CD8-positive, alpha-beta T cell (primary cell): ENCODE measurements at regions of chr19 and their contacts with region 1.

Region 1: GRCh38 chr19:1074544-1075283 is 7.7 kb downstream of the ARHGAP45 start:
- DNase-seq: peak; percentile 90 to 100 (median 97)
- ATAC-seq: peak; percentile 27
- H3K4me3 ChIP-seq: peak overlapping the region; percentile 40 to 63
- H3K4me3 Mint-ChIP-seq: peak overlapping the region; percentile 79
- H3K27ac ChIP-seq: peak overlapping the region; percentile 60 to 98
- H3K27ac Mint-ChIP-seq: peak overlapping the region; percentile 100
- H3K4me1 ChIP-seq: peaks cover 75% of the 10 kb centered on the region
- H3K4me1 Mint-ChIP-seq: peaks cover 51% of the 10 kb centered on the region
- H3K27me3 ChIP-seq: no peaks in the 10 kb centered on the region
- H3K27me3 Mint-ChIP-seq: no peaks in the 10 kb centered on the region
- CTCF ChIP-seq: no peak

Region 2: GRCh38 chr19:991174-991918 is 83.4 kb before region 1 on chr19:
- CTCF ChIA-PET with region 1: no interaction called
- POLR2A ChIA-PET with region 1: no interaction called
- intact Hi-C with region 1: no loop called
- DNase-seq: peak in 7 of 9 experiments; percentile 28 to 82 (median 68)
- ATAC-seq: peak; percentile 80
- H3K4me3 ChIP-seq: no peak overlapping the region
- H3K4me3 Mint-ChIP-seq: no peak overlapping the region
- H3K27ac ChIP-seq: no peak overlapping the region
- H3K27ac Mint-ChIP-seq: no peak overlapping the region
- H3K4me1 ChIP-seq: peaks cover 10% of the 10 kb centered on the region
- H3K4me1 Mint-ChIP-seq: peaks cover 2% of the 10 kb centered on the region
- H3K27me3 ChIP-seq: no peaks in the 10 kb centered on the region
- H3K27me3 Mint-ChIP-seq: no peaks in the 10 kb centered on the region
- CTCF ChIP-seq: no peak

Region 3: GRCh38 chr19:1020868-1021425 is 53.8 kb before region 1 on chr19 and contains the start of gene TMEM259:
- CTCF ChIA-PET with region 1: interaction called, 44 read pairs
- POLR2A ChIA-PET with region 1: interaction called, 647 read pairs
- intact Hi-C with region 1: loop called (anchors 2 kb)
- DNase-seq: peak; percentile 94 to 98 (median 98)
- ATAC-seq: peak; percentile 86
- H3K4me3 ChIP-seq: peak within 1 kb of the TSS; percentile 89 to 94
- H3K4me3 Mint-ChIP-seq: peak within 1 kb of the TSS; percentile 90
- H3K27ac ChIP-seq: peak within 1 kb of the TSS; percentile 97 to 99
- H3K27ac Mint-ChIP-seq: peak within 1 kb of the TSS; percentile 100
- H3K4me1 ChIP-seq: peaks cover 43% of the 10 kb centered on the region
- H3K4me1 Mint-ChIP-seq: peaks cover 45% of the 10 kb centered on the region
- H3K27me3 ChIP-seq: no peaks in the 10 kb centered on the region
- H3K27me3 Mint-ChIP-seq: no peaks in the 10 kb centered on the region
- CTCF ChIP-seq: no peak
- total RNA-seq, gene TMEM259: 408 to 443 TPM

Region 4: DNA sequence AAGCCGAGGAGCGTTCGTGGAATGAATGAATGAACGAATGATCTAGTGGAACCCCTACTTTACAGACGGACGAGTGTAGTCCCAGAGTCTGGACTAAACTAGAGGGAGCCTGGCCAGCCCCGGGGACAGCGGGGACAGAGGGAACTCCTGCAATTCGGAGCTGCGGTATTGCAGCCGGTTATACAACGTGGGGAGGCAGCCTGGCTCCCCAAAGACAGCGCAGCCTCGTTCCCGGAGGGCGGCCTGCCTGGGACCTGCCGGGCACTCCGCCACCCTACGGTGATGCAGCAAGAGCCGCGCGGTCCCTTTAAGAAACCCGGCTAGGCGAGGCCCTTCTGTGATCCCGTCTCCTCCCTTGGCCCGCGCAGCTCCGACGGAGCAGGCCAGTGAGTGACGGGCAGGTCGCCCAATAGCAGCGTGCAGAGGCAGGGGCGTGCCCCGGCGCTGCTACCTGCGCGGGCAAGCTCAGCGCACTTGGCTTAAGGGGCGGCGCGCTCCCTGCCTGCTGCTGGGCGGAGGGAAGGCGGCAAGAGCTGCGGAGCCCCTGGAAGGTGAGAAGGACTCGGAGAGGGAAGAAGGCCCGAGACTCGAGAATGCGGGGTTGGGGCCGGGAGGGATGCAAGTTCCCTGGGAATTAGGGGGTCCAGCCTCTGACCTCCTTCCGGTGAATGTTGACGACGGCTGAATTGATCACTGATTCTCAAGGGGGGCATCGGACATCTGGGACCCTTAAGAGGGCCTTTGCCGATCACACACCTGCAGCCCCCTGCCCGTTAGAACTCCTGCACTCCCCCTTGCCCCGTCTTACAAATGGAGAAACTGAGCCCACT is 34.9 kb before region 1 on chr19 and contains the start of gene ABCA7:
- CTCF ChIA-PET with region 1: interaction called, 7 read pairs
- POLR2A ChIA-PET with region 1: interaction called, 108 read pairs
- intact Hi-C with region 1: no loop called
- DNase-seq: peak; percentile 98 to 100 (median 99)
- ATAC-seq: peak; percentile 90
- H3K4me3 ChIP-seq: peak within 1 kb of the TSS; percentile 71 to 96
- H3K4me3 Mint-ChIP-seq: peak within 1 kb of the TSS; percentile 99
- H3K27ac ChIP-seq: peak within 1 kb of the TSS; percentile 65 to 71
- H3K27ac Mint-ChIP-seq: peak within 1 kb of the TSS; percentile 96
- H3K4me1 ChIP-seq: peaks cover 43% of the 10 kb centered on the region
- H3K4me1 Mint-ChIP-seq: peaks cover 50% of the 10 kb centered on the region
- H3K27me3 ChIP-seq: no peaks in the 10 kb centered on the region
- H3K27me3 Mint-ChIP-seq: no peaks in the 10 kb centered on the region
- CTCF ChIP-seq: no peak
- total RNA-seq, gene ABCA7: 93.3 to 98.0 TPM

Region 5: DNA sequence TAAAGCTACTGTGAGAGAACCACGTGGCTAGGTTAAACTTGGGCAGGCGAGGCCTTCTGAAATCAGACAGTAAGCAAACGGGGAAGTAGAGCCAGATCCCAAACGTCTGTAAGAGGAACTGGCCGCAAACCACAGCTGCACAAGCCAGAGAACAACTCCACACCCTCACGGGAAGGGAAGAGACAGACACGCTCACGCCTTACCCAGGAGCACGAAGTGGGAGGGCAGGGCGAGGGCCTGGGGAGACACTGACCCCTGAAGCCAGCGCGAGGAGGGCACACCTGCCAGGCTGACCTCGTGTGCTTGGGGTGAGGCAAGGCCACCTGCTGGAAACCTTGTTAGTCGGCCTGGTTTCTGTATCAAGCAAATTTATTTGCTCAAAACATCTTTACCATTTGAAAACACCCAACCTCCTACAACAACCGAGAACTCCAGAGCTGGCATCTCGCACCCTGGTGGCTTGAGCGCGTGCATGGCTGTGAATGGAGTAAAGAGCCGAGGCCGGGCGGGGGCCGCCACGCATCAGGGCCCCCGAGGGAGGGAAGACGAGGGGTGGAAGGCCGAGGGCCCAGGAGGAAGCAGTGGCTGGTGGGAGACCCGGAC is 13.2 kb after region 1 on chr19:
- CTCF ChIA-PET with region 1: interaction called, 80 read pairs
- POLR2A ChIA-PET with region 1: interaction called, 1,023 read pairs
- intact Hi-C with region 1: loop called in 1 of 2 experiments (anchors 2 kb)
- DNase-seq: peak in 5 of 9 experiments; percentile 61 to 82 (median 68)
- ATAC-seq: peak; percentile 21
- H3K4me3 ChIP-seq: no peak overlapping the region
- H3K4me3 Mint-ChIP-seq: peak overlapping the region; percentile 64
- H3K27ac ChIP-seq: peak overlapping the region; percentile 29 to 74
- H3K27ac Mint-ChIP-seq: peak overlapping the region; percentile 95
- H3K4me1 ChIP-seq: peaks cover 90% of the 10 kb centered on the region
- H3K4me1 Mint-ChIP-seq: peaks cover 44% of the 10 kb centered on the region
- H3K27me3 ChIP-seq: no peaks in the 10 kb centered on the region
- H3K27me3 Mint-ChIP-seq: no peaks in the 10 kb centered on the region
- CTCF ChIP-seq: no peak

Region 6: DNA sequence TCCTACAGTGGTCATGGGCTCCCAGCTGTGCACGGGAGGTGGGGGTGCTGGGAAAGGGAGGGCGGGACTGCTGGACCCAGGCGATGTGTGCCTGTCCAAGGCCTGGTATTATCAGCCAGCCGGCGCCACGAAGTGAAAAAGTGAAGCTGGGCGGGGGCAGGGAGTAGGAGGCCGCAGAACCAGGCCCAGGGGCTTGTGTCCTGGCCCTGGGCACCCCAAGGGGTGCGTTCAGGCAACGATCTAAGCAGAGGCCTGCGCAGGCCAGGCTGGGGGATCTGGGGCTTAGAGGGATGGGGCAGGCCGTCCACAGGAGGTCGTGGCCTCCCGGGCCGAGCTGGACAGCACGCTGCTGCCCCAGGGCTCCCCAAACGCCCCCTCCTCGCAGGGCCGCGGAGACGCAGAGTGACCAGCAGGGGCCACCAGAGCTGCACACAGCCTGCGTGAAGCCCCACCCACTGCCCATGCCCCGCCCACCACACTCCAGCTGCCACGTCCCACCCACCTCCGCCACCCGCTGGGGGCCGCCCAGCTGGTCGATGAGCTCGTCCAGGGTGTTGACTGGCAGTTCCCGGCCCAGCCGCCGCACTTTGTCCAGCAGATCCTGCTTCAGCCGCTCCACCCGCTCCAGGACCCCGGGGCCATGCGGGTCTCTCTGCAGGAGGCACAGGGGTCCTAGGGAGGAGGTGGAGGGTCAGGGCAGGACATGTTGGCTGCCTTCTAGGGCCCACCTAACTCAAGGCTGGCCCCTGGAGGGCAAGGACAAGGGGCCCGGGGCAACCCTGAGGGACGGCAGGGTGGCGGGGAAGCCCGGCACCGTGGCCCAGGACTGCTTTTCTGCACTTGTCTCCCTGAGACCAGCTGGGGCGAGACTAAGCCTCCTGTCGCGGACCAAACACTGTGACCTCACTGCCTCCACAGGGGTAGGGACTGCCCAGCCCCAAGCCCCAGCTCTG is 38.6 kb after region 1 on chr19:
- CTCF ChIA-PET with region 1: no interaction called
- POLR2A ChIA-PET with region 1: no interaction called
- intact Hi-C with region 1: no loop called
- DNase-seq: peak; percentile 67 to 92 (median 89)
- ATAC-seq: peak; percentile 97
- H3K4me3 ChIP-seq: no peak overlapping the region
- H3K4me3 Mint-ChIP-seq: no peak overlapping the region
- H3K27ac ChIP-seq: peak overlapping the region in 1 of 2 experiments; percentile 56
- H3K27ac Mint-ChIP-seq: no peak overlapping the region
- H3K4me1 ChIP-seq: peaks cover 14% of the 10 kb centered on the region
- H3K4me1 Mint-ChIP-seq: peaks cover 4% of the 10 kb centered on the region
- H3K27me3 ChIP-seq: no peaks in the 10 kb centered on the region
- H3K27me3 Mint-ChIP-seq: no peaks in the 10 kb centered on the region
- CTCF ChIP-seq: peak; percentile 85

Region 7: GRCh38 chr19:1249298-1249989 is 174.7 kb after region 1 on chr19:
- CTCF ChIA-PET with region 1: interaction called, 8 read pairs
- POLR2A ChIA-PET with region 1: interaction called, 7 read pairs
- intact Hi-C with region 1: loop called (anchors 2 to 5 kb)
- DNase-seq: peak; percentile 89 to 98 (median 95)
- ATAC-seq: peak; percentile 55
- H3K4me3 ChIP-seq: peak overlapping the region; percentile 86 to 88
- H3K4me3 Mint-ChIP-seq: peak overlapping the region; percentile 87
- H3K27ac ChIP-seq: peak overlapping the region; percentile 83 to 84
- H3K27ac Mint-ChIP-seq: peak overlapping the region; percentile 88
- H3K4me1 ChIP-seq: peaks cover 31% of the 10 kb centered on the region
- H3K4me1 Mint-ChIP-seq: peaks cover 10% of the 10 kb centered on the region
- H3K27me3 ChIP-seq: no peaks in the 10 kb centered on the region
- H3K27me3 Mint-ChIP-seq: no peaks in the 10 kb centered on the region
- CTCF ChIP-seq: no peak